ENCODE measurements at regions of chr3 and their contacts with region 1.

Region 1: DNA sequence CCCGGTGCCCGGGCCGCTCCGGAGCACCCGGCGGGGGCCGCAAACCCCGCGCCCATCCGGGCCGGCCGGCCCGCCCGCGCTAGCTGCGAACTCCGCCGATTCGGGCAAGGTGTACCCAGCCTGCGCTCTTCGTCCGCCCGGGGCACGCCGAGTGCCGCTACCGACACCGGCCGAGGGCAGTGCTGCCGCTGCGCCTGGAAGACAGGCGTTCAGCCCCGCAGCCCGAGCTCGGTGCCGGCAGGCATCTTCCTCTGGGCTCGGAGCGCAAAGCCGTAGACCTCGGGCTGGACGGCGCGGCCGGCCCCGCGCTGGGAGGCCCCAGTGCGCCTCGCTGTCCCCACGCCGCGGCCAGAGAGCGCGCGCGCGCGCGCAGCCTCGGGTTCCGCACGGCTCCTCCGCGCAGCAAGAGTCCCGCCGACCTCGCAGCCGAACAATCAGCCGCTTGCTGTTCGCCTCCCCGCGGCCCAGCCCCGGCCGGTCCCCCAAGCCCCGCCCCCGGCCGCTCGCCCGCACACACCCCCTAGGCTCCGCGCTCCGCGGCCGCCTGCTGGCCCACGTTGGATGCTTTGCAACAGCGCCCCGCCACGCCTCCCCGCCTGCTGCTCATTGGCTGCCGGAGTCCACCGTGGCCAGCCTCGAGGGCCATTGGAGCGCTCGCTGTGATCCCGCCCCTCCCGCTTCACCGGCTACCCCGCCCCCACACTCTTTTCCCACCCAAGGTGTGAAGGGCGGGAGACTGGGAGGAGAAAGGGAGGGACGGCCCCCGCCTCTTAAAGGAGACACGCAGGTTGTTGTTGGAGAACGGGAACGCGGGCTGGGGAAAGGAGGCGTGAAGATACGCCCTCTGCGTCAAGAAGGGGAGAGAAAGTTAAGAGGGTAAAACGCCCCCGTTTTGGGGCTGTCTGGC is at the start of gene LRIG1:
- DNase-seq: peak; percentile 97
- H3K4me3 ChIP-seq: peak within 1 kb of the TSS; percentile 52 to 95 (median 88)
- H3K27ac ChIP-seq: no peak within 1 kb of the TSS
- H3K4me1 ChIP-seq: peaks cover 2% of the 10 kb centered on the region
- H3K27me3 ChIP-seq: no peaks in the 10 kb centered on the region
- CTCF ChIP-seq: peak in 1 of 2 donors; percentile 38
- total RNA-seq, gene LRIG1: 11.7 to 15.3 TPM

Region 2: GRCh38 chr3:66428733-66429132 is 72.1 kb before region 1 on chr3:
- CTCF ChIA-PET with region 1: no interaction called
- dilution Hi-C with region 1: no loop called
- in situ Hi-C with region 1: no loop called
- intact Hi-C with region 1: loop called (anchors 5 kb)
- DNase-seq: peak; percentile 93
- H3K4me3 ChIP-seq: no peak overlapping the region
- H3K27ac ChIP-seq: peak overlapping the region; percentile 60
- H3K4me1 ChIP-seq: peaks cover 19% of the 10 kb centered on the region
- H3K27me3 ChIP-seq: no peaks in the 10 kb centered on the region
- CTCF ChIP-seq: no peak

Region 3: DNA sequence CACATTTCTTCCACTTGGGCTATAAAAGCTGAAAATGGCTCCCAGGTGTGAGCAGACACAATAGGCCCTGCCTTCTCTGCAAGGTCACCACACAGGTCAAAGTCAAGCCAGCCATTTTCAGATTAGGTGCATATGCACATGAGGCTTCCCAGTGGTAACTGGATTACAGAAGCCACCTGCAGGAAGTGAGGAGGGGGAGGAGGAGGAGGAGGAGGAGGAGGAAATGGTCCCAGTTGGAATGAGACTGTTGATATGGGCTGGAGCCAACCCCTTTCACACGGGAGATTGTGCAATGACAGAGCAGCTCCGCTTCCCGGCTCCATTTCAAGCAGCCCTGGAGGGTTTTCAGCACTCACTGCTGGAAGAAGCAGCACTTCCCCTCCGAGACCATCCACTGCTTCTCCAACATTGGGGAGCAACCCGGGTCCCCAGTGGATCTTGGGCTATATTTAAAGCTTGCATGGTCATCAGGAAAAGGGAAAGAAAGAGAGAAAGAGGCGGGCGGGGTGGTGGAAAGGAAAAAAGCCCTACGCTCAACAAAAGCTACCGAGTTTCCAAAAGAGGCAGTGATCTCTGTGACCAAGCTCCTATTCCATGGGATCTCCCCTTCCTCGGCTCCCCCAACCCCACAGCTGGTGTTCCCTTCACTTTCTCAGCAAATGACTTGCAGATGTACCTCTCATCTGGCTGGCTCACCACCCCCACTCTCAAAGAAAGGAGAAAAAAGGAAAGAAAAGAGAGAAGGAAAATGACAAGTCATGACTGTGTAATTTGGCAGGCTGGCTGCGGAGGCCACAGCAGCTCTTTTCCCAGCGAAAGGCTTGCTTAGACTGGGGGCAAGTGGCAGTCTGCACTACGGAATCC is 58.3 kb before region 1 on chr3:
- CTCF ChIA-PET with region 1: no interaction called
- dilution Hi-C with region 1: no loop called
- in situ Hi-C with region 1: no loop called
- intact Hi-C with region 1: loop called (anchors 2 kb)
- DNase-seq: peak; percentile 41
- H3K4me3 ChIP-seq: no peak overlapping the region
- H3K27ac ChIP-seq: peak overlapping the region; percentile 33
- H3K4me1 ChIP-seq: peaks cover 37% of the 10 kb centered on the region
- H3K27me3 ChIP-seq: no peaks in the 10 kb centered on the region
- CTCF ChIP-seq: no peak

Region 4: GRCh38 chr3:66593964-66594363 is 93.1 kb after region 1 on chr3:
- CTCF ChIA-PET with region 1: no interaction called
- dilution Hi-C with region 1: no loop called
- in situ Hi-C with region 1: no loop called
- intact Hi-C with region 1: loop called (anchors 5 kb)
- DNase-seq: peak; percentile 83
- H3K4me3 ChIP-seq: no peak overlapping the region
- H3K27ac ChIP-seq: no peak overlapping the region
- H3K4me1 ChIP-seq: peaks cover 12% of the 10 kb centered on the region
- H3K27me3 ChIP-seq: no peaks in the 10 kb centered on the region
- CTCF ChIP-seq: no peak

Region 5: DNA sequence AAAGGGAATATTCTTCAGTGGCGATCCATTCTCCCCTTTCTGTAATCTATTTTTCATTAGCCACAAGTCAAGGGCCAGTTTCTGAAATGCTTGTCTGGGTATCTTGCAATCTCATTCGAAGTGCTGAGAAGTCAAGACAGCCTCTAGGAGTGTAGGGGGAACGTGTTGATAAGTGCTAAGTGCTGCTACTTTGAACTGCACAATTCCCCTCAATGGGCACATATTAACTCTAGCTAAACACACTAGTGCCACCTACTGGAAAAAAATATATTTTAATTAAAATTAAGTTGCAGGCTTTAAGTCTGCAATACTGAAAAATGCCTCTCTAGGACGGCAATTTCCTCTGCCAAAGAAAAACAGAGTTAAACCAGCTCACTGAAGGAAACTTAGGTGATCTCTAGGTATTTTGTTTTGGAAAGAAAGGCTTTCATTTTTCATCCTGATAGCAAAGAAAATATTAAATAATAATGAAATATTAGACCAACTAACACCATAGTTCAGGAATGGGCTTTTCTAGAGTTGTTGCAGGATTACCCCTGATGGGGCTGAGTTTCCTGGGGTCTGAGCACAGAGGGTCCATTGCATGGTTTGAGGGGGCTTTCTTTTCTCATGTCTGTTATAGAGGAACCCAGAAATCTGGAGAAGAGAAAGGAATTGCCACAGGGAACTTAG is 315.4 kb after region 1 on chr3:
- CTCF ChIA-PET with region 1: no interaction called
- dilution Hi-C with region 1: no loop called
- in situ Hi-C with region 1: no loop called
- intact Hi-C with region 1: loop called (anchors 5 kb)
- DNase-seq: peak; percentile 13
- H3K4me3 ChIP-seq: no peak overlapping the region
- H3K27ac ChIP-seq: no peak overlapping the region
- H3K4me1 ChIP-seq: no peaks in the 10 kb centered on the region
- H3K27me3 ChIP-seq: no peaks in the 10 kb centered on the region
- CTCF ChIP-seq: peak; percentile 19 to 57

Measured in mammary epithelial cell (primary cell).